Esophagus squamous epithelium (tissue), 5 donors: ENCODE measurements at regions of chr2 and their contacts with region 1.

Region 1: GRCh38 chr2:64516628-64517510 is 7.3 kb upstream of the AFTPH start:
- DNase-seq: no peak
- H3K4me3 ChIP-seq: no peak overlapping the region
- H3K27ac ChIP-seq: peak overlapping the region in 2 of 4 donors; percentile 12 to 43
- H3K4me1 ChIP-seq: peaks cover 0 to 26% (median 6%) of the 10 kb centered on the region in 3 donors
- H3K27me3 ChIP-seq: no peaks in the 10 kb centered on the region
- CTCF ChIP-seq: no peak
- POLR2A ChIP-seq: no peak

Region 2: GRCh38 chr2:64873472-64873924 is 356.6 kb after region 1 on chr2:
- intact Hi-C with region 1: loop called (anchors 5 kb)
- DNase-seq: peak; percentile 6
- H3K4me3 ChIP-seq: peak overlapping the region in 2 of 4 donors; percentile 19 to 52
- H3K27ac ChIP-seq: no peak overlapping the region
- H3K4me1 ChIP-seq: peaks cover 0 to 36% (median 17%) of the 10 kb centered on the region in 3 donors
- H3K27me3 ChIP-seq: no peaks in the 10 kb centered on the region
- CTCF ChIP-seq: peak; percentile 89 to 99 (median 96)
- POLR2A ChIP-seq: no peak